Activated T-helper 2 cell treated with anti-CD3 and anti-CD28 coated beads, Interferon-gamma antibody, Interleukin-2, Interleukin-4, amounts not matched to agents 10 μg/mL and 5 μg/mL and 100 μg/mL, durations not matched to agents 14 hours and 24 hours and 36 hours (primary cell): ENCODE measurements at regions of chr10 and their contacts with region 1.

Region 1: GRCh38 chr10:51389415-51390321 is 309.7 kb downstream of the CSTF2T start:
- DNase-seq: peak; percentile 13
- H3K4me3 Mint-ChIP-seq: no peak overlapping the region
- H3K27ac Mint-ChIP-seq: no peak overlapping the region
- H3K4me1 Mint-ChIP-seq: no peaks in the 10 kb centered on the region
- H3K27me3 Mint-ChIP-seq: no peaks in the 10 kb centered on the region

Region 2: GRCh38 chr10:51960494-51960895 is 570.8 kb after region 1 on chr10:
- intact Hi-C with region 1: loop called (anchors 1 kb)
- DNase-seq: no peak
- H3K4me3 Mint-ChIP-seq: no peak overlapping the region
- H3K27ac Mint-ChIP-seq: no peak overlapping the region
- H3K4me1 Mint-ChIP-seq: no peaks in the 10 kb centered on the region
- H3K27me3 Mint-ChIP-seq: peaks cover 17% of the 10 kb centered on the region

Region 3: DNA sequence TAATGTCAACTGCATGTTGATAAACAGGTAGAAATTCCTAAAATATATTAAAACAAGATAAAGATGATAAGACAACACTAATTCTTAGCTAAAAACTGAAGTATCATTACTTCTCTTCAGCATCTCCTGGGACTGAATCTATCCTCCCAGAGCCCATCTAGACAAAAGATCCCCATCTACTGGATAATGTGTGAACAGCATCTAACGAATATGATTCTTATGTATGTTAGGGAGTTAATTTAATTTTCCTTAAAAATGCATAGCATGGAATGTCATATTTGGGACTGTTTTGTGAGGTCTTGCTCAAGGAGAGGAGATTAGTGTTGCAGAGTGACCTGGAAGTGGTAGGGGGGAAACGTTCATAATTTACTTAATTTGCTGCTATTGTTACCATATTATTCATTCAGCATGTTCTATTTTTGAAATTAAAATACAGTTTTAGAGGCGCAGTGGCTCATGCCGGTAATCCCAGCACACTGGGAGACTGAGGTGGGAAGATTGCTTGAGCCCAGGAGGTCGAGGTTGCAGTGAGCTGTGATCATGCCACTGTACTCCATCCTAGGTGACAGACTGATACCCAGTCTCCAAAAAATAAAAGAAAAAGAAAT is 614.8 kb after region 1 on chr10:
- intact Hi-C with region 1: loop called (anchors 2 kb)
- DNase-seq: no peak
- H3K4me3 Mint-ChIP-seq: no peak overlapping the region
- H3K27ac Mint-ChIP-seq: no peak overlapping the region
- H3K4me1 Mint-ChIP-seq: no peaks in the 10 kb centered on the region
- H3K27me3 Mint-ChIP-seq: no peaks in the 10 kb centered on the region

Region 4: GRCh38 chr10:52215745-52216361 is 826.2 kb after region 1 on chr10:
- intact Hi-C with region 1: loop called (anchors 1 kb)
- DNase-seq: no peak
- H3K4me3 Mint-ChIP-seq: no peak overlapping the region
- H3K27ac Mint-ChIP-seq: no peak overlapping the region
- H3K4me1 Mint-ChIP-seq: no peaks in the 10 kb centered on the region
- H3K27me3 Mint-ChIP-seq: no peaks in the 10 kb centered on the region